ENCODE measurements at regions of chr12 and their contacts with region 1.

Region 1: DNA sequence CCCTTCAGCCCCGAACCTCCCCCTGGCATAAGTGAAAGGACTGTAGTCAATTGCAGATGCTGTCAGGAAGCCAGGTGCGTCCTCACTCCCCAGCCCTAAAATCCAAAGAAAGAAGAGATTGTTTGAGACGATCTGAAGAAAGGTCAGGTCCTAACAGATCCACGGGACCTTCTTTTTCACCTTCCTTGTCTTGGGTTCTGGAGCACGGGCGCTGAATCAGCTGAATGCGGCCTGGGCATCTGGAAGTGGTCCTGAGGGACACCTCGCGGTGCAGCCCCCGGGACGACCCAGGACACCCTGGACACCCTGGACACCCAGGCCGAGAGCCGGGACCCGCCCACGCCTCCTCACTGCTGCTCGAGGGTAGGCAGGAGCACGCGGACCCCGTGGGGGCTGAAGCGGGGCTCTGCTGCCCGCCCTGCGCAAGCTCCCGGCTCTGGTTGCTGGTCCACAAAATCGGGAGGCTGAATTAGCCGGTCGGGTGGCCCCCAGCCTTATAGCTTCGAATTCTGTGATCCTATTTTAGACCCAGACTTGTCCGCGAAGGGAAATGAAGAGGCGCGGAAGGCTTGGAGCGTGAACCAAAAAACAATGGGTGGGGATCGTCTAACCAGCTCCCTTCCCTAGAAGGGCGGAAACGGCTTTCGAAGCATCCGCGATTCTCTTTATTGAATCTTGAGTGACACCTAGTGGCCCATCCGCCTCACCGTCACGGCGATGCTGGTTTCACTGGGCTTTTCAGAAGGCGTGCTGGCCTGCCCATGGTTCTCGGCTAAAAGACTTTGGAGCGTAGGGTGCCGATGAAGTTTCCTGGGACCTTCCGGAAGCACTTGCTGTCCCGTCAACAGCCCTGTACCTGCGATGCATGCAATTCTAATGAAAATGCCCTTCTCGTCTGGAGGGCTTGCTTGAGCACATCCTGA is 46.4 kb upstream of the PLXNC1 start:
- DNase-seq: peak; percentile 81
- H3K4me3 Mint-ChIP-seq: peak overlapping the region; percentile 84
- H3K27ac Mint-ChIP-seq: peak overlapping the region; percentile 72
- H3K4me1 Mint-ChIP-seq: peaks cover 37% of the 10 kb centered on the region
- H3K27me3 Mint-ChIP-seq: peaks cover 10% of the 10 kb centered on the region

Region 2: GRCh38 chr12:92784795-92785562 is 1317.0 kb before region 1 on chr12:
- intact Hi-C with region 1: loop called (anchors 1 kb)
- DNase-seq: peak; percentile 5
- H3K4me3 Mint-ChIP-seq: no peak overlapping the region
- H3K27ac Mint-ChIP-seq: no peak overlapping the region
- H3K4me1 Mint-ChIP-seq: peaks cover 4% of the 10 kb centered on the region
- H3K27me3 Mint-ChIP-seq: no peaks in the 10 kb centered on the region

Region 3: DNA sequence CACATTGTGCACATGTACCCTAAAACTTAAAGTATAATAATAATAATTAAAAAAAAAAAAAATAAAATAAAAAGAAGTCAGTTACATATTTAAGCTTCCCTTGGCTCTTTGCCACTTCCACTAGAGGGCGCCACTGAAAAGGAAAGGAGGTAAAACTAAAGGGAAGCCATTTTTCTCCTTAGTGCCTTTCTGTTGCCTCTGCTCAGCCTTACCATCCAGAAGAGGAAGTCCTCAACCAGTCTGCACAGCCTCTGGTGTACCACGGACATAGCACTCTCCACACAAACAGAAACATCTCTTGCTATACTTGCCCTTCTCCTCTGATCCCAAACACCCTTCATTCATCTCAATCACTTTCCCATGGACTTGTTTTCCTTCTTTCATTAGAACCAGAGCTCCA is 1003.9 kb before region 1 on chr12:
- intact Hi-C with region 1: loop called (anchors 5 kb)
- DNase-seq: peak; percentile 56
- H3K4me3 Mint-ChIP-seq: no peak overlapping the region
- H3K27ac Mint-ChIP-seq: no peak overlapping the region
- H3K4me1 Mint-ChIP-seq: peaks cover 6% of the 10 kb centered on the region
- H3K27me3 Mint-ChIP-seq: no peaks in the 10 kb centered on the region

Region 4: DNA sequence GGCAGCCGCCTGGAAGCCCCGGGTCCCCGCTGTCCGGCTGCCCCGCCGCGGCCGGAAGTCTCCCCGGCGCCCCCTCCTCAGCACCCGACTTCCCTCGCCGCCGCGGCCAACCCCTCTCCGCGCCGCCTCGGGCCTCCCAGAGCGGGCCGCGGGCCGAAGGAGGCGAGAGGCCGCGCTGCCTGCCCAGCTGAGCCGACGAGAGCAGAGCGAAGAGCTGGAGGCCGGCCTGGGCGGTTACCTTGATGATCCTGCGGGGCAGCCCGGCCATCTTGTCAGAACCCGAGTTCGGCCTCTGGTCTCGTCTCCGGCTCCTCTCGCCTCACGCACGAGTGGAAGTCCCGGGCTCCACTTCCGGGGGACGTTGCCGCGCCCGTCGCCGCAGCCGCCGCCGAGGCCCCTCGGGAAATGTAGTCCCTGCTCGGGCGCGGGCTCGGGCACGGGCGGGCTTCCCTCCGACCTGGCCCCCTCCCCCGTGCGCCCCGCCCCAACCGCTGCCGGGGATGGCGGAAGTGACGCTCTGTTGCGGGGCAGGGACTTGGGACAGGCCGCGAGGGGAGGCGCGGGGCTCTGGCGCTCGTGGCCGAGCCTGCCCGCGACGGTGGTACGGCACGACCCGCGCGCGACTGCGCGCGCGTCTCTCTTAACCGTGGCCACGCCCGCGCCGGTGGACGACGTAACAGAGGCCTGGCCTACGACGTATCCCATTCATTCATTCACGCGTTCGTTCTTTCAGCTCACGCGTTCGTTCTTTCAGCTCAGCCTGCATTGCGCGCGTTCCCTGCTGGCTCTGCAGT is 660.2 kb before region 1 on chr12 and contains the start of gene UBE2N:
- intact Hi-C with region 1: loop called (anchors 1 kb)
- DNase-seq: peak; percentile 95
- H3K4me3 Mint-ChIP-seq: peak within 1 kb of the TSS; percentile 96
- H3K27ac Mint-ChIP-seq: peak within 1 kb of the TSS; percentile 99
- H3K4me1 Mint-ChIP-seq: peaks cover 51% of the 10 kb centered on the region
- H3K27me3 Mint-ChIP-seq: no peaks in the 10 kb centered on the region
- total RNA-seq, gene UBE2N: 231 and 239 TPM in 2 replicates

Region 5: DNA sequence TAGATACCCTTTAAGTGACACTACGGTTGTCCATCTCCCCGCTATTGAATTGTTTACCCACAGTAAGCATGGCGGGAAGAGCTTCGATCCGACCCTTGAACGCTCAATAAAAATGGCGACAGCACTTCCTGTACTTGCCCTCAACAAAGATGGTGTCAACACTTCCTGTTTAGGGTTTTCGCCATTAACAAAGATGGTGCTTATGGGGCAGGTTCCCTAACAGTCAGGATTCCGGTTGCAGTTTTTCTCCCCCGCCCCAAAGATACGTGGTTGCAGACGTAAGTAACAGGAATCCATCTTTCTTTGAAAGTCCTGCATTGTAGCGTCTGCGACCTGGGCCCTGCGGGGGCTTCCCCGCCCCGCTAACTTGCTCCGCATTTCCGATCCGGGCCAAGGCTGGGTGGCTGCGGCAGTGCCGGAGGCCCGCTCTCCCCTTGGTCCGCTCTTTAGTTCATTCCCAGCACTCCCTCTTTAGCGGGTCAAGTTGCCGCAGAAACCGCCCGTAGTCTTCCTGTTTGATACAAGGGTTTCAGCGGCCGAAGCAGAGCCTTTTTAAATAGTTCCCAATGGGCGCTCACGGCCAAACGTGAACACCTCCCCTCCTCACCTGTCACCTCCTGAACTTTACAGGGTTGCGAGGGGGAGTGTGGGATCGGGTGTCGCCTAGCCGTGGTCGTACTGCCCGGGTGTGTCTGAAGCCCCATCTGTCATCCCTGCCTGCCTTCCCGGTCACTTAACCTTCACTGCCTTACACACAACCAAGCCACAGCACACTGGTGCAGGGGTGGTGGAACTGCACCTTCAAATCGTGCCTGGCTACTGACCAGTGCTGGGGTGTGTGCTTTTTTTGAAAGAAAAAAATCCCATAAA is 424.6 kb before region 1 on chr12 and contains the start of gene CRADD:
- intact Hi-C with region 1: loop called (anchors 1 kb)
- DNase-seq: peak; percentile 86
- H3K4me3 Mint-ChIP-seq: peak within 1 kb of the TSS; percentile 85
- H3K27ac Mint-ChIP-seq: peak within 1 kb of the TSS; percentile 96
- H3K4me1 Mint-ChIP-seq: peaks cover 38% of the 10 kb centered on the region
- H3K27me3 Mint-ChIP-seq: no peaks in the 10 kb centered on the region
- total RNA-seq, gene CRADD: 11.2 and 12.3 TPM in 2 replicates

Region 6: GRCh38 chr12:93766796-93767523 is 335.0 kb before region 1 on chr12:
- intact Hi-C with region 1: loop called (anchors 1 kb)
- DNase-seq: peak; percentile 40
- H3K4me3 Mint-ChIP-seq: peak overlapping the region; percentile 0
- H3K27ac Mint-ChIP-seq: no peak overlapping the region
- H3K4me1 Mint-ChIP-seq: peaks cover 34% of the 10 kb centered on the region
- H3K27me3 Mint-ChIP-seq: peaks cover 6% of the 10 kb centered on the region

Region 7: DNA sequence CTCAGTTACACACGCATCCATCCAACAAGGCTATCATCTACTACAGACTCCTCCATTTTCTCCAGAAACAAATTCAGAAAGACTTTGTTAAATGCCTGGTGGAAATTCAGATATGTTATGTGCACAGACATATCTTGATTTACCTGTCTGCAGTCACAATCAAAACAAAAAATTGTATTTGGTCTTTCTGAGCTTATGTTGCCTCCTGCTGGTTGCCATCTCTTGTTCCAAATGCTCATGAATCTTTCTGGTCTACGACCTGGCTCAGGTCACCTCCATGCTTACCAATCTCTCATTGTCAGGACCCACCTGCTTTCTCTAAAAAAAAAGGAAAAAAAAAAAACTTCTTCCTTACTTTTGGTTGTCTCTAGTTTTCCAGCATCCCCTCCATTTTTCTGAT is 122.8 kb before region 1 on chr12:
- intact Hi-C with region 1: loop called (anchors 1 kb)
- DNase-seq: peak; percentile 15
- H3K4me3 Mint-ChIP-seq: no peak overlapping the region
- H3K27ac Mint-ChIP-seq: no peak overlapping the region
- H3K4me1 Mint-ChIP-seq: peaks cover 42% of the 10 kb centered on the region
- H3K27me3 Mint-ChIP-seq: peaks cover 10% of the 10 kb centered on the region

Region 8: GRCh38 chr12:94262228-94263010 is 160.4 kb after region 1 on chr12:
- intact Hi-C with region 1: no loop called
- DNase-seq: peak; percentile 56
- H3K4me3 Mint-ChIP-seq: peak overlapping the region; percentile 84
- H3K27ac Mint-ChIP-seq: peak overlapping the region; percentile 96
- H3K4me1 Mint-ChIP-seq: peaks cover 55% of the 10 kb centered on the region
- H3K27me3 Mint-ChIP-seq: no peaks in the 10 kb centered on the region

Measured in activated T-helper 1 cell treated with anti-CD3 and anti-CD28 coated beads, Interleukin-12 subunit alpha, Interleukin-12 subunit beta, Interleukin-2, Interleukin-4 antibody, amounts not matched to agents 30 ng/mL and 10 ng/mL and 1 ng/mL, durations not matched to agents 14 hours and 24 hours and 36 hours (primary cell).